ENCODE measurements at regions of chr10 and their contacts with region 1.

Region 1: GRCh38 chr10:5071411-5072198 is 22.6 kb upstream of the AKR1C3 start:
- DNase-seq: peak in 1 of 2 donors; percentile 91
- ATAC-seq: peak; percentile 93 to 98 (median 97)
- H3K4me3 ChIP-seq: peak overlapping the region in 3 of 10 donors; percentile 0 to 27 (median 17)
- H3K27ac ChIP-seq: peak overlapping the region; percentile 33 to 93 (median 83)
- H3K4me1 ChIP-seq: peaks cover 0 to 29% (median 23%) of the 10 kb centered on the region in 9 donors
- H3K27me3 ChIP-seq: no peaks in the 10 kb centered on the region
- CTCF ChIP-seq: no peak

Region 2: DNA sequence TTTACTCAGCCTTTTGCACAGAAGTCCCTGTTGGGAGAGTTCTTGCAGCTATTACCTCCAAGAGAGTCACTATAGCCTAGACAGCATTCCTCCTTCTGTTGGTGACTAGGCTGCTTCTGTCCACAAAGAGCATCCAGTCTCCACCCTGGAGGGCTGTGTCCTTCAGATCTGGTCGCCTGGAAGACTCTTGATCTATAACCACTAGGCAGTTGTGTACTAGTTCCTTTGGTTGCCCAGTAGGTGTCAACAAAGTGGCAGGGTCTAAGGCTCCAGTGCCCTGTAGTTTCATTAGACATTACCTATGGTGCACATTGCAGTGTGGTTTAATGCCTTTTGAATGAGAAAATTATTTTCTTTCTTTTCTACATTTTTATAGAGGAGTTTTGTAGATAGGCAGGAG is 56.7 kb before region 1 on chr10:
- intact Hi-C with region 1: loop called in 2 of 10 experiments (anchors 10 kb)
- DNase-seq: no peak
- ATAC-seq: no peak
- H3K4me3 ChIP-seq: no peak overlapping the region
- H3K27ac ChIP-seq: no peak overlapping the region
- H3K4me1 ChIP-seq: peaks cover 0 to 30% (median 15%) of the 10 kb centered on the region in 9 donors
- H3K27me3 ChIP-seq: no peaks in the 10 kb centered on the region
- CTCF ChIP-seq: peak in 6 of 9 donors; percentile 6 to 42 (median 18)

Region 3: DNA sequence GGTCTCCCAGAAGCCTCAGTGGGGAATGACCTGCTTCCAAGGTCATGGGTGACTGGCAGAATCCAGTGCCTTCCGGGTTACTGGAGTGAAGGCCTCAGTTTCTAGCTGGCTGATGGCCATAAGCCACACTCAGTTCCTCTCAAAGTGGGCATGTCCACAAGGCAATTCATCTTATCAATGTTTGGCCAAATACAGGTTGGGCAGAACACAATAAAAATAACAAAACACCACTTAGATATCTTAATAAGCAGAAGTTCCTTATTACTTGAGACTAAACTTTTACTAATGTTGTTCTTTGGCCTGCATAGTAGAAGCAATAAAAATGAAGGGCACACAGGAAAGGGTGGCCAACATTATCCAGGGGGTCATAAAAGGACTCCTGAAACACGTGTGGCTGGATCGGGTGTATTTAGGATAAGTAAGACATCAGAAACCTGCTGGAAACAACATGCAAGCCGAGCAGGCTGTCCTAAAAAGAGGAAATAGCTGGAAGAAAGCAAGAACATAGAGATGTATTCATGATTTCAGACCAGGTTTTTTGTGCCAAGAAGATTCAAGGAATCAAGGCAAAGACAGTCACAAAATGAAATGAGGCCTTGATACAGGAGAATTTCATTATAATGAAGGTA is 48.3 kb before region 1 on chr10:
- intact Hi-C with region 1: loop called in 2 of 10 experiments (anchors 10 kb)
- DNase-seq: no peak
- ATAC-seq: no peak
- H3K4me3 ChIP-seq: no peak overlapping the region
- H3K27ac ChIP-seq: no peak overlapping the region
- H3K4me1 ChIP-seq: peaks cover 0 to 28% (median 22%) of the 10 kb centered on the region in 9 donors
- H3K27me3 ChIP-seq: no peaks in the 10 kb centered on the region
- CTCF ChIP-seq: no peak

Region 4: GRCh38 chr10:5040784-5041470 is 30.7 kb before region 1 on chr10:
- intact Hi-C with region 1: no loop called
- DNase-seq: no peak
- ATAC-seq: no peak
- H3K4me3 ChIP-seq: peak overlapping the region in 5 of 10 donors; percentile 13 to 26 (median 21)
- H3K27ac ChIP-seq: peak overlapping the region in 3 of 10 donors; percentile 5 to 41 (median 15)
- H3K4me1 ChIP-seq: peaks cover 0 to 19% (median 0%) of the 10 kb centered on the region in 9 donors
- H3K27me3 ChIP-seq: no peaks in the 10 kb centered on the region
- CTCF ChIP-seq: no peak